Activated B cell treated with CpG ODN at 0.5 μM for 24 hours (primary cell): ENCODE measurements at regions of chr14 and their contacts with region 1.

Region 1: GRCh38 chr14:106518054-106518943 is 991.9 kb downstream of the TMEM121 start:
- DNase-seq: peak; percentile 68
- ATAC-seq: peak; percentile 85
- H3K4me3 Mint-ChIP-seq: peak overlapping the region; percentile 4
- H3K27ac Mint-ChIP-seq: no peak overlapping the region
- H3K4me1 Mint-ChIP-seq: peaks cover 22% of the 10 kb centered on the region
- H3K27me3 Mint-ChIP-seq: no peaks in the 10 kb centered on the region
- CTCF ChIP-seq: peak; percentile 31

Region 2: GRCh38 chr14:106395456-106396050 is 122.7 kb before region 1 on chr14:
- CTCF ChIA-PET with region 1: no interaction called
- POLR2A ChIA-PET with region 1: no interaction called
- intact Hi-C with region 1: no loop called
- DNase-seq: no peak
- ATAC-seq: no peak
- H3K4me3 Mint-ChIP-seq: no peak overlapping the region
- H3K27ac Mint-ChIP-seq: no peak overlapping the region
- H3K4me1 Mint-ChIP-seq: no peaks in the 10 kb centered on the region
- H3K27me3 Mint-ChIP-seq: peaks cover 23% of the 10 kb centered on the region
- CTCF ChIP-seq: no peak

Region 3: GRCh38 chr14:106436310-106436905 is 81.9 kb before region 1 on chr14:
- CTCF ChIA-PET with region 1: interaction called, 9 read pairs
- POLR2A ChIA-PET with region 1: no interaction called
- intact Hi-C with region 1: loop called (anchors 1 kb)
- DNase-seq: peak; percentile 44
- ATAC-seq: no peak
- H3K4me3 Mint-ChIP-seq: no peak overlapping the region
- H3K27ac Mint-ChIP-seq: no peak overlapping the region
- H3K4me1 Mint-ChIP-seq: no peaks in the 10 kb centered on the region
- H3K27me3 Mint-ChIP-seq: peaks cover 21% of the 10 kb centered on the region
- CTCF ChIP-seq: peak; percentile 45

Region 4: DNA sequence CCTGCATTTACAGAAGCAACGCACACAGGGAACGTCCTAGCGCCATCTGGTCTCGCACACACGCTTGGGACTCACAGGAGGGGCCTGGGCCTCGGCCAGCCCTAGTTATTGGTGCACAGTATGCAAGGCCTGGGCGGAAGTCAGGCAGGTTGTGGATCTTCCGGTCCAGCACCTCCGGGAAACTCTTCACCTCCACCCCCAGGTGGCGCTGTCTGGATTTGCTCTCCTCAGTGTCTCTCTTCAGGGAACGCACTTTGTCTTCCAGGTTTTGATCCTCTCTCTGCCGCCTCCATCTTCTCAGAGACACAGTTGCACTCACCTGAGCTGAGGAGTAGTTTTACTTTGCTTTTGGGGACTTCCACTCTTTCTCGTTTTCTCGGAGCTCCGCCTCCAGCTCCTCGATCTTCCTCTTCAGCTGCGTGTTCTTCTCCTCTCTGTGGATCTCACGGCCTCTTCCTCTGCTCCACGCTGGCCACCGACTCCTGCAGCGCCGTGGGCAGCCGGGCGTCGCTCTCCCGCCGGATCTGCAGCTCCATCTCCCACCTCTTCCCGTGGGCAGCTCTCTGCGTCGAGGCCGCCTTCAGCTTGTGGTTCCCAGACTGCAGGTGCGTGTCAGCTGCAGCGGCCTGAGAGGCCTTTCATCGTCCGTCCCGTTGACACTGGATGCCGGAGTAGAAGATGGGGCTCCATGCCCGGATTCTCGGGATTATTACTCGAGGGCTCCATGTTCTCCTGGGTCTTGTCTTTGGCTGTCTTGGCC is 58.1 kb before region 1 on chr14:
- CTCF ChIA-PET with region 1: interaction called, 3 read pairs
- POLR2A ChIA-PET with region 1: no interaction called
- intact Hi-C with region 1: loop called (anchors 1 kb)
- DNase-seq: peak; percentile 38
- ATAC-seq: peak; percentile 42
- H3K4me3 Mint-ChIP-seq: no peak overlapping the region
- H3K27ac Mint-ChIP-seq: no peak overlapping the region
- H3K4me1 Mint-ChIP-seq: peaks cover 11% of the 10 kb centered on the region
- H3K27me3 Mint-ChIP-seq: peaks cover 2% of the 10 kb centered on the region
- CTCF ChIP-seq: no peak

Region 5: GRCh38 chr14:106530423-106531107 is 12.3 kb after region 1 on chr14:
- CTCF ChIA-PET with region 1: interaction called, 12 read pairs
- POLR2A ChIA-PET with region 1: no interaction called
- intact Hi-C with region 1: no loop called
- DNase-seq: peak; percentile 30
- ATAC-seq: peak; percentile 88
- H3K4me3 Mint-ChIP-seq: no peak overlapping the region
- H3K27ac Mint-ChIP-seq: no peak overlapping the region
- H3K4me1 Mint-ChIP-seq: peaks cover 7% of the 10 kb centered on the region
- H3K27me3 Mint-ChIP-seq: peaks cover 2% of the 10 kb centered on the region
- CTCF ChIP-seq: no peak